Activated CD4-positive, alpha-beta memory T cell treated with anti-CD3 and anti-CD28 coated beads, Interleukin-2, amount 10 ng/mL, durations not matched to agents 7 days and 5 days (primary cell): ENCODE measurements at regions of chr6 and their contacts with region 1.

Region 1: DNA sequence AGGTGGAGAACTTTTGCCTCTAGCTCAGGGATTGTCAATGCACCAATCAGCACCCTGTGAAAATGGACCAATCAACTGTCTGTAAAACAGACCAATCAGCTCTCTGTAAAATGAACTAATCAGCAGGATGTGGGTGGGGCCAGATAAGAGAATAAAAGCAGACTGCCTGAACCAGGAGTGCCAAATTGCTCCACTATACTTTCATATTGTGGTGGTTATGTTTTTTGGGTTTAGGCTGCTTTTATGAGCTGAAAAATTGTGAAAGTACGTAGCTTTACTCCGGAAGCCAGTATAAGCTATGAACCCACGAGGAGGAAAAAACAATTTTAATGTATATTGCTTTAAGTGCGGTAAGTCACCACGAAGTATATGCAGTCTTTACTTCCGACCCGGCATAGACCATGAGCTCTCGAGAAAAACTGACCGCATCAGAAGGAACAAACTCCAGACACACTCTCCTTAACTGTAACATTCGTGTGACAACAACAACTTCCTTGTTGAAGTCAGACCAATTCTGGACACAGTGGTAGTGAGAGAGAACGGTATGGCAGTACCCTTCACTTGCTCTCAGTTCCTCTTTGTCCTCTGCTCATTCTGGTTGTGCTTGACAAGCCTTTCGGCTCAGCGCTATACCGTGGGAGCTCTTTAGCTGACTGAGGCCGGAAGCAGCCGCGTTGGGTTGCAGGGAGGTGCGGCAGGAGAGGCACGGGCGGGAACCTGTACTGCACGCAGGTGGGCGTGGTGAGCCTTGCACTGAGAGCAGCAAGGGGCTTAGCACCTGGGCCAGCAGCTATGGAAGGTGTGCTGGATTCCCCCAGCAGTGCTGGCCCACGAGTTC is 81.9 kb upstream of the E2F3 start:
- DNase-seq: peak; percentile 85
- H3K4me3 Mint-ChIP-seq: peak overlapping the region; percentile 81
- H3K27ac Mint-ChIP-seq: peak overlapping the region; percentile 99
- H3K4me1 Mint-ChIP-seq: peaks cover 21% of the 10 kb centered on the region
- H3K27me3 Mint-ChIP-seq: peaks cover 4% of the 10 kb centered on the region

Region 2: GRCh38 chr6:20008131-20008530 is 311.6 kb before region 1 on chr6:
- CTCF ChIA-PET with region 1: no interaction called
- POLR2A ChIA-PET with region 1: no interaction called
- DNase-seq: no peak
- H3K4me3 Mint-ChIP-seq: no peak overlapping the region
- H3K27ac Mint-ChIP-seq: no peak overlapping the region
- H3K4me1 Mint-ChIP-seq: no peaks in the 10 kb centered on the region
- H3K27me3 Mint-ChIP-seq: peaks cover 15% of the 10 kb centered on the region

Region 3: DNA sequence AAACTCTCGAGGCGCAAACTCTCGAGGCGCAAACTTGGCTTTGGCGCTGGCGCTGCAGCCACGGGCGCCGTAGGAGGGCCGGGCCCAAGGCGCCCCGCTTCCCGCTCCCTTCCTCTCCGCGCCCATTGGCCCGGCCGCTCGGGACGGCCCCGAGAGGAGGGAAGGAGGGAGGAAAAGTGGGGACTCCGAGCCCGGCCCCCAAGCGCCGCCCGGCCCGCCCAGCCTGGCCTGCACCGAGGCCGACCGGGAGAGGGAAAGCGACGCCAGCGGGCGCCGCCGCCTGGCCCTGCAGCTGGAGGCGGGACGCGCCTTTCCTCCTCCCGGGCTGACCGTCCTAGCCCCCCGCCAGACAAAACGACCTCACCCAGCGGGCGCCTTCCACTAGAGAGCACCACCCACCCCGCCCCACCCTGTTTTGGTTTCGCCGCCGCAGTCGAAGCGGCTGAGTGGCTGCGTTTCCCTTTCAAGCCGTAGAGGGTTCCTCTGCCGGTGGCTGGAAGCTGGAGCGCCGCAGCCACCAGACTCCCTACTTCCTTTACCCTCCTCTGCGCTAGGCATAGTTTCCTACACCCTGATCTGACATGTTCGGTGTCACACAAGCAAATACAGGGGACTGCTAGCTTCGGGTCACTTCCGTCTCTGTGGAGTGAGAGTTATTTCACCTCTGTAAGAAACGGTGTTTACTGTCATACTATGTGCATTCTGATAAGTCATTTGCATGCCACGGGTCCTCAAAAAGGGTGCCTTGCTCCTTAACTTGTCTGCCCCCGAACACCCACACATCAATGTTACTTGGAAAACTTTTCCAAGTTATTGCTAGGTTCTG is 107.1 kb before region 1 on chr6 and contains the start of gene MBOAT1:
- CTCF ChIA-PET with region 1: interaction called, 3 read pairs
- POLR2A ChIA-PET with region 1: interaction called, 19 read pairs
- DNase-seq: peak; percentile 79
- H3K4me3 Mint-ChIP-seq: peak within 1 kb of the TSS; percentile 93
- H3K27ac Mint-ChIP-seq: peak within 1 kb of the TSS; percentile 95
- H3K4me1 Mint-ChIP-seq: peaks cover 46% of the 10 kb centered on the region
- H3K27me3 Mint-ChIP-seq: no peaks in the 10 kb centered on the region
- total RNA-seq, gene MBOAT1: 25.5 to 27.1 TPM

Region 4: DNA sequence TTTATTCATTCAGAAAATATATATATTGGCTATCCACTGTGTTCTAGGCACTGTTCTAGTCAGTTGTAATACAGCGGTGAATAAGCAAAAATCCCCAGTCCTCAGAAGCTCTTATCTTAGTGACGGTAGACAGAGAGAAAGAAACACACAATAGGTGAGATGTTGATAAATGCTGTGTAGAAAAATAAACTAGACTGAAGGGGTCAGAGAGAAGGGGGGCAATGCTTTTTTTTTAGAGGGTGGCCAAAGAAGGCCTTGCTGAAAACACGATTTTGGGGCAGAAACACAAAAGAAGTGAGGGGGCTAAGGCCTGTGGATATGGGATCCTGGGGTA is 39.5 kb before region 1 on chr6:
- CTCF ChIA-PET with region 1: no interaction called
- POLR2A ChIA-PET with region 1: no interaction called
- DNase-seq: no peak
- H3K4me3 Mint-ChIP-seq: no peak overlapping the region
- H3K27ac Mint-ChIP-seq: no peak overlapping the region
- H3K4me1 Mint-ChIP-seq: no peaks in the 10 kb centered on the region
- H3K27me3 Mint-ChIP-seq: peaks cover 43% of the 10 kb centered on the region

Region 5: GRCh38 chr6:20340068-20340848 is 20.5 kb after region 1 on chr6:
- CTCF ChIA-PET with region 1: interaction called, 6 read pairs
- POLR2A ChIA-PET with region 1: interaction called, 64 read pairs
- DNase-seq: no peak
- H3K4me3 Mint-ChIP-seq: no peak overlapping the region
- H3K27ac Mint-ChIP-seq: no peak overlapping the region
- H3K4me1 Mint-ChIP-seq: peaks cover 25% of the 10 kb centered on the region
- H3K27me3 Mint-ChIP-seq: no peaks in the 10 kb centered on the region

Region 6: GRCh38 chr6:20377623-20378265 is 58.0 kb after region 1 on chr6:
- CTCF ChIA-PET with region 1: no interaction called
- POLR2A ChIA-PET with region 1: interaction called, 12 read pairs
- DNase-seq: no peak
- H3K4me3 Mint-ChIP-seq: no peak overlapping the region
- H3K27ac Mint-ChIP-seq: no peak overlapping the region
- H3K4me1 Mint-ChIP-seq: peaks cover 24% of the 10 kb centered on the region
- H3K27me3 Mint-ChIP-seq: no peaks in the 10 kb centered on the region

Region 7: GRCh38 chr6:20401205-20402091 is 81.7 kb after region 1 on chr6 and contains the start of gene E2F3:
- CTCF ChIA-PET with region 1: interaction called, 21 read pairs
- POLR2A ChIA-PET with region 1: interaction called, 171 read pairs
- DNase-seq: peak; percentile 100
- H3K4me3 Mint-ChIP-seq: peak within 1 kb of the TSS; percentile 96
- H3K27ac Mint-ChIP-seq: peak within 1 kb of the TSS; percentile 98
- H3K4me1 Mint-ChIP-seq: peaks cover 37% of the 10 kb centered on the region
- H3K27me3 Mint-ChIP-seq: no peaks in the 10 kb centered on the region
- total RNA-seq, gene E2F3: 29.8 to 30.1 TPM

Region 8: DNA sequence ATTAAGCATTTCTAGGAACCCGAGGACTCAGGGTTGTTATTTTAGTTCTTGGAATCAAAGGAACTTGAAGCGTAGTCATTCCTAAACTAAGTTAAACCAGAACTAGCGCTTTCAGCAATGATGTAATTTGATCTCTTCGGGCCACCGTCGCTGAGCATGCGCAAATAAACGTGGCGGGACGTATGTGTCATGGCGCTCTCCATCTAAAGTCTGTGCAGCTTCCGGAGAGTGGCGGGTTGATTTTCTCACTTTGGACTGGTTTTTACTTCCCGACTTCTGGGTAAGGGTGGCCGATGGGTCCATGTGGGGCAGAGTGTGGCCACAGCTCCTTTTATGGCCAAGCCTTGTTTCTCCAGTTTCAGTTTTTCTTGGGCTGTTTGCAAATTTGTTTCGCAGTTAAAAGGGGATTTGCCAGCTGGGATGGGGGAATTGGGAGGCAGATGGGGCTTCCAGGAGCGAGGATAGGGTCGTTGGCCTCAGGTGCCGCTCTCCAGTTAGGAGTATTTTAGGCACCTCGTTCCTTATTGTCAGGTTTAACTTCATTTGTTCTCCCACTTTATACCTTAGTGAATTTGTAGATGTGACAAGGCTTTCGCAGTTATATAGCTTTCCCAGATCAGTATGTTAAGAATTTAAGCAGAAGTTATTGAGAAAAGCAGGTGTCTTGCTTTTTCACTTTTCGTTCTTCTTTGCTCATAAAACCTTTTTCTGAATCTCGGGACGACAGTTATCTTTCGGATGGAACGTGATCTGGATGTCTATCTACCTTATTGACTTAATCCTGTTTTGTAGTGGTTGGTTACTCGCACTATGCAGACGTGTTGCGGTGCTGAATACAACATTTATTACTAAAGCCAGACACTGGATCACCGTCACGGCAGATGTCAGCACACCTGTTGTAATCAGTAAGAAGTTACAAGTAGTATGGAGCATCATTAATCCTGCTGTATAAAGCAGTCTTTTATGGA is 214.8 kb after region 1 on chr6 and contains the start of gene CDKAL1:
- CTCF ChIA-PET with region 1: interaction called, 3 read pairs
- POLR2A ChIA-PET with region 1: interaction called, 28 read pairs
- DNase-seq: peak; percentile 95
- H3K4me3 Mint-ChIP-seq: peak within 1 kb of the TSS; percentile 97
- H3K27ac Mint-ChIP-seq: peak within 1 kb of the TSS; percentile 94
- H3K4me1 Mint-ChIP-seq: peaks cover 48% of the 10 kb centered on the region
- H3K27me3 Mint-ChIP-seq: peaks cover 1% of the 10 kb centered on the region
- total RNA-seq, gene CDKAL1: 21.2 to 23.0 TPM